Psoas muscle (tissue), 8 donors: ENCODE measurements at regions of chr2 and their contacts with region 1.

Region 1: GRCh38 chr2:226649871-226650660 is 149.6 kb downstream of the IRS1 start:
- DNase-seq: peak; percentile 62 to 80
- ATAC-seq: peak; percentile 94 to 97 (median 96)
- H3K4me3 ChIP-seq: peak overlapping the region; percentile 20
- H3K27ac ChIP-seq: peak overlapping the region; percentile 85
- H3K4me1 ChIP-seq: peaks cover 19% of the 10 kb centered on the region
- H3K27me3 ChIP-seq: no peaks in the 10 kb centered on the region
- CTCF ChIP-seq: no peak

Region 2: GRCh38 chr2:226137201-226137811 is 512.8 kb before region 1 on chr2:
- intact Hi-C with region 1: loop called in 1 of 2 experiments (anchors 10 kb)
- DNase-seq: no peak
- ATAC-seq: no peak
- H3K4me3 ChIP-seq: no peak overlapping the region
- H3K27ac ChIP-seq: peak overlapping the region; percentile 67
- H3K4me1 ChIP-seq: peaks cover 19% of the 10 kb centered on the region
- H3K27me3 ChIP-seq: no peaks in the 10 kb centered on the region
- CTCF ChIP-seq: no peak

Region 3: GRCh38 chr2:226325526-226325925 is 324.5 kb before region 1 on chr2:
- intact Hi-C with region 1: loop called in 1 of 2 experiments (anchors 10 kb)
- DNase-seq: no peak
- ATAC-seq: no peak
- H3K4me3 ChIP-seq: no peak overlapping the region
- H3K27ac ChIP-seq: no peak overlapping the region
- H3K4me1 ChIP-seq: peaks cover 10% of the 10 kb centered on the region
- H3K27me3 ChIP-seq: no peaks in the 10 kb centered on the region
- CTCF ChIP-seq: no peak

Region 4: GRCh38 chr2:226354434-226354833 is 295.6 kb before region 1 on chr2:
- intact Hi-C with region 1: loop called in 1 of 2 experiments (anchors 10 kb)
- DNase-seq: no peak
- ATAC-seq: no peak
- H3K4me3 ChIP-seq: no peak overlapping the region
- H3K27ac ChIP-seq: peak overlapping the region; percentile 78
- H3K4me1 ChIP-seq: peaks cover 17% of the 10 kb centered on the region
- H3K27me3 ChIP-seq: no peaks in the 10 kb centered on the region
- CTCF ChIP-seq: no peak

Region 5: GRCh38 chr2:226524381-226524897 is 125.6 kb before region 1 on chr2:
- intact Hi-C with region 1: no loop called
- DNase-seq: no peak
- ATAC-seq: peak in 3 of 4 donors; percentile 51 to 74 (median 55)
- H3K4me3 ChIP-seq: no peak overlapping the region
- H3K27ac ChIP-seq: no peak overlapping the region
- H3K4me1 ChIP-seq: no peaks in the 10 kb centered on the region
- H3K27me3 ChIP-seq: no peaks in the 10 kb centered on the region
- CTCF ChIP-seq: no peak

Region 6: DNA sequence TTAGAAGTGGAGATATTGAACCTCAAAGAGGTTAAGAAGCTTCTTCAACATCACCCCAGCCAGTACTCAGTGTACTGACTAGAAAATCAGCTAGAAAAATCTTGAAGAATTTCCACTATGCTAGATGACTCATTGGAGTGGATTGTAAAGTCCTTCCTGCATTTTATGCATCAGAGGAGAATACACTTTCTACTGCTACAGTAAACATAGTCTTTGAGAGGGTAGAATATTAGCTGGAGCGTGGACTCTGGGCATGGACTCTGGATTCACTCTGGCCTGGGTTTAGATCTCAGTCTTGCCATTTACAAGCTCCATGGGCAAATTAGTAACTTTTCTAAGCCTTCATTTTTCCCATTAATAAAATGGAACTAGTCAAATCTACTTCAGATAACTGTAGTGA is 66.4 kb before region 1 on chr2:
- intact Hi-C with region 1: loop called in 1 of 2 experiments (anchors 5 kb)
- DNase-seq: no peak
- ATAC-seq: no peak
- H3K4me3 ChIP-seq: no peak overlapping the region
- H3K27ac ChIP-seq: no peak overlapping the region
- H3K4me1 ChIP-seq: peaks cover 16% of the 10 kb centered on the region
- H3K27me3 ChIP-seq: no peaks in the 10 kb centered on the region
- CTCF ChIP-seq: no peak

Region 7: GRCh38 chr2:226782092-226782713 is 132.1 kb after region 1 on chr2:
- intact Hi-C with region 1: no loop called
- DNase-seq: no peak
- ATAC-seq: peak in 2 of 4 donors; percentile 48 to 49
- H3K4me3 ChIP-seq: no peak overlapping the region
- H3K27ac ChIP-seq: peak overlapping the region; percentile 91
- H3K4me1 ChIP-seq: peaks cover 35% of the 10 kb centered on the region
- H3K27me3 ChIP-seq: no peaks in the 10 kb centered on the region
- CTCF ChIP-seq: no peak

Region 8: DNA sequence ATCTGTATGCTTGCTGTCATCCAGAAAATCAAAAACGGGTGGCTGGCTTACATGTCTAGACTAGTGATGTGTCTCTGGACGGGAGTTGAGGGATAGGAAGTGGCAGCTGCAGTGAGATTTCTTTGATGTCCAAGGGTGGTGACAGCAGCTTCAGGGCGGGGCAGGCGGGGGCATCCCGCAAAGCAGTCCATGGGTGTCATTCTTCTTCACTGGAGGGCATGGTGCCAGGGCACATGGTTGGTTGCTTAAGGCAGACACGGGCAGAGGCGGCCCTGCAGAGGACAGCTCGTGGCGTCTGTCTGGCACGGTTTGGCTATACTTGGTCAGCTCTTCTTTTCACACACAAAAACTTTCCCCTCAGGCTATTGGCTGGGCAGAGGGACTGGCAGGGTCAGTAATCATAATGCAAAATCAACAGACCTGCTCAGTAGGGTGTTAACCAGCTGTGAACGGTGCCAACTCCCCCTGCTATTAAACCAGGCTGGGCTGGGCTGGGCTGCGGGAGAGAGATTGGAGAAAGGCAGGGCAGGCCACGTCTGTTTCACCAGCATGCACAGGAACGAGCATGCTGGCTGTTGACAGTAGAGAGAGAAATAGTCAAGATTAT is 578.1 kb after region 1 on chr2:
- intact Hi-C with region 1: no loop called
- DNase-seq: peak; percentile 91 to 97
- ATAC-seq: peak; percentile 92 to 98 (median 97)
- H3K4me3 ChIP-seq: no peak overlapping the region
- H3K27ac ChIP-seq: peak overlapping the region; percentile 86
- H3K4me1 ChIP-seq: peaks cover 21% of the 10 kb centered on the region
- H3K27me3 ChIP-seq: no peaks in the 10 kb centered on the region
- CTCF ChIP-seq: no peak